HEK293T (cell line): ENCODE measurements at regions of chr16 and their contacts with region 1.

Region 1: GRCh38 chr16:87636072-87636684 is 33.9 kb downstream of the JPH3 start:
- DNase-seq: peak; percentile 87

Region 2: GRCh38 chr16:87581833-87582203 is 54.4 kb before region 1 on chr16:
- CTCF ChIA-PET with region 1: interaction called, 32 read pairs
- POLR2A ChIA-PET with region 1: interaction called, 4 read pairs
- DNase-seq: peak; percentile 57

Region 3: GRCh38 chr16:87647431-87648185 is 11.4 kb after region 1 on chr16:
- CTCF ChIA-PET with region 1: interaction called, 10 read pairs
- POLR2A ChIA-PET with region 1: no interaction called
- DNase-seq: no peak